ENCODE measurements at regions of chr1 and their contacts with region 1.

Region 1: GRCh38 chr1:116485071-116485735 is 85.6 kb downstream of the CD58 start:
- DNase-seq: peak; percentile 65
- H3K4me3 ChIP-seq: no peak overlapping the region
- H3K27ac ChIP-seq: no peak overlapping the region
- H3K4me1 ChIP-seq: peaks cover 54% of the 10 kb centered on the region
- H3K27me3 ChIP-seq: no peaks in the 10 kb centered on the region
- CTCF ChIP-seq: peak; percentile 72 to 94

Region 2: DNA sequence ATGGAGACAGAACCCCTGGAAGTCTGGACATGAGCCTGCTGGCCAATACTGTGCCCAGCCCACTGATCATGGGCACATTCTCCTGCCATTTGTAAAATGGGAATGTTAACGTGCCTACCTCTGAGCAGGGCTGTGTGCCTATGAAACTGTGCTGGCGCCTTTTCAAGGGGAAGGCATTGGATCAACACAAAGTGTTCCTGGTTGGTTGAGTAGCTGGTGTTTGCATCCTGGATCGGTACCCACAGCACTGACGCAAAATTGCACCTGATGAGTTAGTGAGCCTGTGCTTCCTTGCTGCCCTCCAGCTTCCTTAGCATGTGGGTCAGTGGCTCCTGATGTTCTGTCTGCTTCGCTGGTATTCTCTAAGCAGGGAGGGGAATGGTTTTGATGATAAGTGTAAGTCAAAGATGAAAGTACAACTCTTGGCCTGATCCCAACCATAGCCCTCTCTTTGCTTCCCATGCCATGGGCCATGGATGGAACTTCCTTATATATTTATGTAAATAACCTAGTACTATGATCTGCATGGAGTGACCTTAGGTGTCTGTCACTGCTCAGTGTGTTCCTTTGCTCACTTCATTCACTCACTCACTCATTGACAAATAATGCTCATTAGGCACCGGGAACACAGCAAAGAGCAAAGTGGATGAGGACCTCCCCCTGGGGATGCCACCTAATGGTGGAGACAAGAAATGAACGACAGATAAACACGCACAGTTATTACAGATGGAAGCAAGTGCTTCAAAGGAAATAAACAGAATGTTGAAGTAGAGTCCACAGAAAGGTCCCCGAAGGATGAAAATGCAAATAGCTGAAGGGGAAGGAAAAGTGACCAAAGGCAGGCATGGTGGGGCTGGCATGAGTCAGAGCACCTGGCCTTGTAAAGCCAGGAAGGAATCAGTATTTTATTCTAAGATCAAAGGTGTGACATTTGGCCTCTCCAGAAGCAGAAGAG is 351.2 kb before region 1 on chr1:
- CTCF ChIA-PET with region 1: interaction called, 16 read pairs
- dilution Hi-C with region 1: no loop called
- in situ Hi-C with region 1: loop called in 1 of 2 experiments (anchors 5 kb)
- intact Hi-C with region 1: loop called (anchors 1 kb)
- DNase-seq: no peak
- H3K4me3 ChIP-seq: no peak overlapping the region
- H3K27ac ChIP-seq: no peak overlapping the region
- H3K4me1 ChIP-seq: peaks cover 14% of the 10 kb centered on the region
- H3K27me3 ChIP-seq: no peaks in the 10 kb centered on the region
- CTCF ChIP-seq: no peak

Region 3: DNA sequence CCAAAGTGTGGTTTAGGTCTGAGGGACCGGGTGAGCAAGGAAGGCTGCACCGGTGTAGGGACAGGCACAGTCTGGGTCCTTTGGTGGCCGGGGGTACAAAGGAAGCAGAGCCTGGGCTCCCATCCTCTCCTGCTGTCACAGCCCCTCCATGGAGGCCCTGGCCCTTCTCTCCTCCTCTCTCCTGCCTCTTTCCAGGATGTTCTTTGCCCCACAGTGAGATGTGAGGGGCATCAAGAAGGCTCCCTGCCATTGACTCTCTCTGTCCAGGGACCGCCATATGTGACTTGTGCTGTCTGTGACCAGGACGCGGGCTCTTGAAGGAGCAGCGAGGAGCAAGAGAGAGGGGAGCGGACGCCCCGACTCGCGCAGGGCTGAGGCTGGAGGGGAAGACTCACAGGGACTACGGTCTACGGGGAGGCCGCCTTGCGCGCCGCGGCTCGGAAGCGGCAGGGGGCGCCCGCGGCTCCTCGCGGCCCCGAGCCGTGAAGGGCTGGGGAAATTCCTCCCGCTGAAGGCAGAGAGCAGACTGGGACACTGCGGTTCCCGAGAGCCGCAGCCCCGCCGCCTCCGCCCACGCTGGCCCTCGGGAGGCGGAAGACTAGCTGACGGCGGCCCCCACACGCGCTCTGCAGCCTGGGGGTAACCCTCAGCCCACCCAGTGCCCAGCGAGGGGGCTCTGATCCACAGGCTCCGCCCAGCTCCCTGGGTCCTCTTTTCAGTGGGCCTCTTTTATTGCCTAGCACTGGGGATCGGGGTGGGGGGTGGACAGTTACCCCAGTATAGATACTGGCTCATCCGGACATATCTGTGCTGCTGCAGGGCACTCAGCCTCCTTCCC is 333.2 kb before region 1 on chr1:
- CTCF ChIA-PET with region 1: interaction called, 3 read pairs
- dilution Hi-C with region 1: no loop called
- in situ Hi-C with region 1: loop called in 1 of 2 experiments (anchors 5 kb)
- intact Hi-C with region 1: loop called (anchors 1 kb)
- DNase-seq: peak; percentile 73
- H3K4me3 ChIP-seq: peak overlapping the region; percentile 34 to 49 (median 36)
- H3K27ac ChIP-seq: no peak overlapping the region
- H3K4me1 ChIP-seq: peaks cover 4% of the 10 kb centered on the region
- H3K27me3 ChIP-seq: no peaks in the 10 kb centered on the region
- CTCF ChIP-seq: peak; percentile 65 to 93

Region 4: GRCh38 chr1:116243333-116244054 is 241.7 kb before region 1 on chr1:
- CTCF ChIA-PET with region 1: no interaction called
- dilution Hi-C with region 1: no loop called
- in situ Hi-C with region 1: no loop called
- intact Hi-C with region 1: no loop called
- DNase-seq: no peak
- H3K4me3 ChIP-seq: no peak overlapping the region
- H3K27ac ChIP-seq: no peak overlapping the region
- H3K4me1 ChIP-seq: no peaks in the 10 kb centered on the region
- H3K27me3 ChIP-seq: no peaks in the 10 kb centered on the region
- CTCF ChIP-seq: no peak

Region 5: GRCh38 chr1:116360429-116361173 is 124.6 kb before region 1 on chr1:
- CTCF ChIA-PET with region 1: no interaction called
- dilution Hi-C with region 1: no loop called
- in situ Hi-C with region 1: loop called in 1 of 2 experiments (anchors 10 kb)
- intact Hi-C with region 1: loop called (anchors 1 kb)
- DNase-seq: no peak
- H3K4me3 ChIP-seq: no peak overlapping the region
- H3K27ac ChIP-seq: no peak overlapping the region
- H3K4me1 ChIP-seq: peaks cover 14% of the 10 kb centered on the region
- H3K27me3 ChIP-seq: no peaks in the 10 kb centered on the region
- CTCF ChIP-seq: peak; percentile 32 to 46

Region 6: GRCh38 chr1:116409751-116410191 is 75.4 kb before region 1 on chr1:
- CTCF ChIA-PET with region 1: interaction called, 3 read pairs
- dilution Hi-C with region 1: no loop called
- in situ Hi-C with region 1: no loop called
- intact Hi-C with region 1: loop called (anchors 2 kb)
- DNase-seq: peak; percentile 74
- H3K4me3 ChIP-seq: no peak overlapping the region
- H3K27ac ChIP-seq: no peak overlapping the region
- H3K4me1 ChIP-seq: peaks cover 40% of the 10 kb centered on the region
- H3K27me3 ChIP-seq: no peaks in the 10 kb centered on the region
- CTCF ChIP-seq: no peak

Region 7: DNA sequence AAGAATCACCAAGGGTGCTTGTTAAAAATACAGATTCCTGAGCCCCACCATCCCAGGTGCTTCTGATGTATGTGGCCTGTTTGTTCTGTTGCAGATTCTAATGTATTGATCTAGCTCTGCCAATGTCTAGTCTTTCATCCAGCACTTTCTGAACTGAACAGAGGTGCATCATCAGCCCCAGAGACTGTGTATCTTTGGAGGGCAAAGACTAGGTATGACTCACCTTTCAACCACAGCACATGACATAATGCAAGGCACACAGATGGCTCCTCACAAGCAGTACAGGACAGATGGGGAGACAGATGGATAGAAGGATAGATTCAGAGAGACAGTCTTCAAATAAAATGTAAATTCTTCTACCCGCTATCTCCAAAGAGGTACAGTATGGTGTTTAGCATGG is 53.3 kb after region 1 on chr1:
- CTCF ChIA-PET with region 1: no interaction called
- dilution Hi-C with region 1: loop called (anchors 5 kb)
- in situ Hi-C with region 1: no loop called
- intact Hi-C with region 1: no loop called
- DNase-seq: peak; percentile 86
- H3K4me3 ChIP-seq: no peak overlapping the region
- H3K27ac ChIP-seq: peak overlapping the region; percentile 69
- H3K4me1 ChIP-seq: peaks cover 51% of the 10 kb centered on the region
- H3K27me3 ChIP-seq: no peaks in the 10 kb centered on the region
- CTCF ChIP-seq: no peak

Region 8: DNA sequence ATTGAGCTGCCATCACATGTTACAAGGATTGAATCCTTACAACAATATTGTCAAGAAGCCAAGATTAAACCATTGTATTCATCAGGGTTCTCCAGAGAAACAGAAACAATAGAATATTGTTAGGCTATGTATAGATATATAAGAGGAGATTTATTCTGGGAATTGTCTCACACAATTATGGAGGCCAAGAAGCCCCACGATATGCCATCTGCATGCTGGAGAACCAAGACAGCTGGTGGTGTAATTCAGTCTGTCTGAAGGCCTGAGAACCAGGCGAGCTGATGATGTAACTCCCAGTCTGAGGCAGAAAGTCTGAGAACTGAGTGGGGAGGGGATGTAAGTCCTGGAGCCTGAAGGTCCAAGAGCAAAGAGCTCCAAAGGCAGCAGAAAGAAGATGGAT is 560.4 kb after region 1 on chr1:
- CTCF ChIA-PET with region 1: no interaction called
- dilution Hi-C with region 1: no loop called
- in situ Hi-C with region 1: no loop called
- intact Hi-C with region 1: no loop called
- DNase-seq: no peak
- H3K4me3 ChIP-seq: no peak overlapping the region
- H3K27ac ChIP-seq: no peak overlapping the region
- H3K4me1 ChIP-seq: no peaks in the 10 kb centered on the region
- H3K27me3 ChIP-seq: no peaks in the 10 kb centered on the region
- CTCF ChIP-seq: no peak

Measured in mammary epithelial cell (primary cell).